ENCODE measurements at regions of chr4 and their contacts with region 1.

Region 1: GRCh38 chr4:162075726-162076125 is 88.1 kb downstream of the FSTL5 start:
- DNase-seq: no peak
- H3K4me3 ChIP-seq: no peak overlapping the region
- H3K27ac ChIP-seq: no peak overlapping the region
- H3K4me1 ChIP-seq: no peaks in the 10 kb centered on the region
- H3K27me3 ChIP-seq: no peaks in the 10 kb centered on the region
- CTCF ChIP-seq: no peak
- POLR2A ChIP-seq: no peak

Region 2: GRCh38 chr4:161680146-161680545 is 395.6 kb before region 1 on chr4:
- intact Hi-C with region 1: no loop called
- DNase-seq: no peak
- H3K4me3 ChIP-seq: no peak overlapping the region
- H3K27ac ChIP-seq: no peak overlapping the region
- H3K4me1 ChIP-seq: no peaks in the 10 kb centered on the region
- H3K27me3 ChIP-seq: no peaks in the 10 kb centered on the region
- CTCF ChIP-seq: no peak
- POLR2A ChIP-seq: no peak

Region 3: DNA sequence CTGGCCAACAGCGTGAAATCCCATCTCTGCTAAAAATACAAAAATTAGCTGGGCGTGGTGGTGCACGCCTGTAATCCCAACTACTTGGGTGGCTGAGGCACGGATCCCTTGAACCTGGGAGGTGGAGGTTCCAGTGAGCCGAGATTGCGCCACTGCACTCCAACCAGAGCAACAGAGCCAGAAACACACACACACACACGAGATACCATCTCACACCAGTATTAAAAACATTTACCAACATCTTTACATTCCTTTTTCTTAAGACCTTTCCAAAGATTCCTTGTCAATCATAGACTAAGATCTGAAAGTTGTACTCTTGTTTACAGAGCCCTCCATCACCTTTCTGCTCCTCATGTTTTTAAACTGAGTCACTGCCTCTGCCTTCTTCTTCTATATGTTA is 14.9 kb after region 1 on chr4:
- intact Hi-C with region 1: loop called (anchors 1 kb)
- DNase-seq: no peak
- H3K4me3 ChIP-seq: no peak overlapping the region
- H3K27ac ChIP-seq: no peak overlapping the region
- H3K4me1 ChIP-seq: no peaks in the 10 kb centered on the region
- H3K27me3 ChIP-seq: no peaks in the 10 kb centered on the region
- CTCF ChIP-seq: no peak
- POLR2A ChIP-seq: no peak

Region 4: DNA sequence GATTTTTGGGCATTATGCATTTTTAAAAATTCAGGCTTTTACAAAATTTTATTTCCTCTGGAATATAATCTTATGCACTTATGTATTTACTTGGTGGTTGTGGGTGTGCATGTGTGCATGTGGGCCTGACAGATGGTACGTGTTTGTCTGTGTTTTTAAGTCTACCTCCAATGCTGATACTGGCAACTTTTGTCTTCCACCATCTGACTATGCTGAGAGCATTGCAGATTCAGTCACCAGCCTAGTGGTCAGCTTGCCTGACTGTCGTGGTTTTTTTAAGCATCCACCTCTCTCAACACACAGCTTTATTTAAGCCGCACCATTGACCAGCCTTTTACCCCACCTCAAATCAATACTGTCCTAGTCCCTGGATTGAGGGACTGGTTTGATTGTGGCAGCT is 51.0 kb after region 1 on chr4:
- intact Hi-C with region 1: no loop called
- DNase-seq: no peak
- H3K4me3 ChIP-seq: no peak overlapping the region
- H3K27ac ChIP-seq: no peak overlapping the region
- H3K4me1 ChIP-seq: no peaks in the 10 kb centered on the region
- H3K27me3 ChIP-seq: no peaks in the 10 kb centered on the region
- CTCF ChIP-seq: no peak
- POLR2A ChIP-seq: no peak